HepG2 (cell line): ENCODE measurements at regions of chr18 and their contacts with region 1.

Region 1: DNA sequence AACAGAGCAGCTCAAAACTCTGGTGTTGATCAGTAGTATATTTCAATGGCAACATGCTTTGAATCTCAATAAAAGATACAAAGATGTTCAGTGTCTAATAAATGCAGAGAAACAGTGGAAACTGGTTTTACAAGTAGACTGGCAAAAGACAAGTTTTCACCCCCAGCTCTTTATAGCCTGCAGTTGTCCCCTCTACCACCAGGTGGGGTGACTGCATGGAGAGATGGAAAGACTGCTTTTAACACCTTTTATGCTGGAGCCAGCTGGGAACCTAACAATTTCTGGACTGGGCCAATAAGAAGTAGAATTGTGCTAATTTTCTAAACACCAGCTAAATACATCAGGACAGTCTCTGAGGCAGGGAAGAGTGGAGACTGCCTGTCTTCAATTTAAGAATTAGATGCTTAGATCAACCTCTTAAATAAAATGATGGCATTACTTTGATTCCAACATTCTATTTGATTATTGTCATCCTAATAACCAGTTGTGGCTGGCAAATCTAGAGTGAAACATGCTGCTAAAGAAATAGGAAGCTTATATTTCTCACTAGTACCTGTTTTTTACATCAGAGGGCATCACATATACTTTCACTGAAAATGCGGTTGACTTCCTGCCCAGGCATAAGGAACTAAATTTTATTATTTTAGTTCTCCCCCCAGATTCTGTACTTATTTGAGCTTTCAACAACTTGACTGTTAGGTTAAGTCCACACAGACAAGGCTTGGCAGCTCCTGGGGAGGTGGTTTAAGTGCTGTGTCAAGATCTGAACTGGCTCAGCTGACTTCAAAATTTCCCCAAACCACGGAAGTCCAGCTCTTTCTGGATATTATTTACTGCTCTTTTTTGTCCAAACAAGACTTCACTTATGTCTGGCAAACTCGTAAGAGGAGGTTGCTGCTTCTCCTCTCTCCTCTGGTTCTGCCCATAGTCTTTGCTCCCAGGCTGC is 140.5 kb downstream of the TPGS2 start:
- DNase-seq: peak; percentile 52
- ATAC-seq: peak; percentile 74; the same call in 2 of the 3 replicates
- H3K4me3 ChIP-seq: no peak overlapping the region
- H3K27ac ChIP-seq: no peak overlapping the region
- H3K4me1 ChIP-seq: no peaks in the 10 kb centered on the region
- H3K27me3 ChIP-seq: peaks cover 0 to 7% of the 10 kb centered on the region in 2 experiments; a peak in 2 of 5 replicates
- CTCF ChIP-seq: peak; percentile 78
- EP300 ChIP-seq: no peak
- POLR2A ChIP-seq: no peak
- RAD21 ChIP-seq: peak; percentile 51

Region 2: DNA sequence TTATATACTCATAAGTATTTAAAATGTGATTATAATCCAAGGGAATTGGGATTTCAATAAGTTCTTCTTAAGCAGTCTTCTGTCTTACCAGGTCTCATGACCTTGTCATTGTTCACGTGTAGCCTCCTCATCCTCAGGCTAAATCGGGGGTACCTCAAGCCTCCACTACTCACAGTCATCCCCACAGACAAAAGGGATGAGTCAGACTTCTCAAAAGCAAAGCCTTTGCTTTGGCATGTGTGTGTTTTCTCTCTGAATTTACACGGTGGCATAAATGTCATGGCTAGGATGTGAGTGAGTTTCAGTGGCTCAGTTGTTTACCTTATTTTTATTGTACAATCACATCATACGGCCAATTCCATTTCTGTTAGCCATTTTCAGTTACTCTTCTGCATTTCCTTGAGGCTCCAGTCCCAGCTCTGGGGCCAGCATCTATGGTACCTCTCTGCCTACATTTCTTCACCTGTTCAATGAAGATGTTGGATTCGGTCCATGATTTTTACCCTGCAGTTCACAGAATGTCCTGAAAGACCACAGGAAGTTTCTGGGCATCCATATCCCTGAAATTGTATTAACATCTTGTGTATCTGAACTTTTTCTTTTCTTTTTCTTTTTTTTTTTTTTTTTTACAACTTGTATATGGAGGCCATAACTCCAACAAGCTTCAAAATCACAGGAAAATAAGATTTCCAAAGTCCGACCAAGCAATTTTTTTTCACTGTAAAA is 195.5 kb before region 1 on chr18:
- CTCF ChIA-PET with region 1: no interaction called
- POLR2A ChIA-PET with region 1: no interaction called
- in situ Hi-C with region 1: no loop called
- intact Hi-C with region 1: no loop called
- DNase-seq: no peak
- ATAC-seq: no peak
- H3K4me3 ChIP-seq: no peak overlapping the region
- H3K27ac ChIP-seq: no peak overlapping the region
- H3K4me1 ChIP-seq: peaks cover 11% of the 10 kb centered on the region
- H3K27me3 ChIP-seq: peaks cover 0 to 3% of the 10 kb centered on the region in 2 experiments; a peak in 1 of 5 replicates
- CTCF ChIP-seq: no peak
- EP300 ChIP-seq: no peak
- POLR2A ChIP-seq: no peak
- RAD21 ChIP-seq: no peak

Region 3: GRCh38 chr18:36702401-36703013 is 14.2 kb after region 1 on chr18:
- CTCF ChIA-PET with region 1: no interaction called
- POLR2A ChIA-PET with region 1: no interaction called
- in situ Hi-C with region 1: no loop called
- intact Hi-C with region 1: no loop called
- DNase-seq: no peak
- ATAC-seq: no peak
- H3K4me3 ChIP-seq: no peak overlapping the region
- H3K27ac ChIP-seq: no peak overlapping the region
- H3K4me1 ChIP-seq: no peaks in the 10 kb centered on the region
- H3K27me3 ChIP-seq: peaks cover 3 to 57% of the 10 kb centered on the region in 2 experiments; a peak in 3 of 5 replicates
- CTCF ChIP-seq: no peak
- EP300 ChIP-seq: no peak
- POLR2A ChIP-seq: no peak
- RAD21 ChIP-seq: no peak

Region 4: GRCh38 chr18:36757081-36757480 is 68.8 kb after region 1 on chr18:
- CTCF ChIA-PET with region 1: interaction called, 35 read pairs
- POLR2A ChIA-PET with region 1: interaction called, 3 read pairs
- in situ Hi-C with region 1: loop called (anchors 5 kb)
- intact Hi-C with region 1: loop called (anchors 1 kb)
- DNase-seq: peak; percentile 48
- ATAC-seq: peak; percentile 71
- H3K4me3 ChIP-seq: no peak overlapping the region
- H3K27ac ChIP-seq: no peak overlapping the region
- H3K4me1 ChIP-seq: 0 out of 2 replicates have a peak, but pooled peaks cover 6% of the 10 kb centered on the region
- H3K27me3 ChIP-seq: no peaks in the 10 kb centered on the region
- CTCF ChIP-seq: peak; percentile 72
- EP300 ChIP-seq: no peak
- POLR2A ChIP-seq: no peak
- RAD21 ChIP-seq: peak; percentile 32; the same call in 1 of the 2 replicates

Region 5: DNA sequence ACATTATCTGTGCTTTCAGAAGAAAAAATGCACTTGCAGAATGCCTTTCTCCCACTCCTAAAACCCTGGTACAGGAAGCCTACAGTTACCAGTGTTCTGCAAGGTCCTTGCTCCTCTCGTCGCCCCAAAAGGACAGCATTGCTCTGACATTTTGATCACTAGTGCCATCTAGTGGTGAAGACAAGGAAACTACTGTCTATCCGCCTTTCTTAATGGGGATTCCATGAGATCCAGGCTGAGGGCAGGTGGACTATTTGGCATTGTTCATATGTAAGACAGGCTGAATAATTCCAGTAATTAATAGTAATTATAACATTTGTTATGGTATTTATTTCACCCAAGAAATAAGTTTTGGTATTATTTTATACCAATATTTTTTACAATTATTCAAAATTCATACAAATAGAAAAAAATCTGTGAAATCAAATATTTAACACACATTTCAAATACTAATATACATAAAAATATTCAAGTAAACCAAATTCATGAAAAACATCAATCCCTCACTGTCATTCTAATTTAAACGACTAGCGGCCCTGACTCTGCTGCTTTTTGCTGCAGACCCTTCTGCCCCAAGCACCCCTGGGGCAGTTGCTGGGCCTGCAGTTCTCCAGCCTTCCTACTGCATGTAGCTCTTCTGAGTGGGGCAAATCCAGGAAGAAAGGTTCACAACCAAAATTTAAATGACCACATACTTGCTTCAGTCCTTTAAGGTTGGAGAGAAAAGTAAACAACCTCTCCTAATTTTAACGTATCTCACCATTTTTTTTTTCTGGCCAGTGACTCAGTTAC is 121.5 kb after region 1 on chr18:
- CTCF ChIA-PET with region 1: interaction called, 5 read pairs
- POLR2A ChIA-PET with region 1: no interaction called
- in situ Hi-C with region 1: no loop called
- intact Hi-C with region 1: loop called (anchors 5 kb)
- DNase-seq: peak; percentile 56
- ATAC-seq: peak; percentile 94
- H3K4me3 ChIP-seq: no peak overlapping the region
- H3K27ac ChIP-seq: no peak overlapping the region
- H3K4me1 ChIP-seq: no peaks in the 10 kb centered on the region
- H3K27me3 ChIP-seq: no peaks in the 10 kb centered on the region
- CTCF ChIP-seq: peak; percentile 86
- EP300 ChIP-seq: no peak
- POLR2A ChIP-seq: no peak
- RAD21 ChIP-seq: no peak

Region 6: GRCh38 chr18:36828630-36829361 is 140.5 kb after region 1 on chr18 and contains the starts of genes KIAA1328 and TPGS2:
- CTCF ChIA-PET with region 1: no interaction called
- POLR2A ChIA-PET with region 1: no interaction called
- in situ Hi-C with region 1: no loop called
- intact Hi-C with region 1: no loop called
- DNase-seq: peak; percentile 75
- ATAC-seq: peak; percentile 93
- H3K4me3 ChIP-seq: peak within 1 kb of the TSS; percentile 94 to 99 (median 94)
- H3K27ac ChIP-seq: peak within 1 kb of the TSS; percentile 73
- H3K4me1 ChIP-seq: peaks cover 40% of the 10 kb centered on the region
- H3K27me3 ChIP-seq: no peaks in the 10 kb centered on the region; a peak in 1 of 5 replicates
- CTCF ChIP-seq: peak; percentile 85
- EP300 ChIP-seq: no peak
- POLR2A ChIP-seq: peak in 1 of 2 experiments; percentile 67
- RAD21 ChIP-seq: peak; percentile 7; the same call in 1 of the 2 replicates
- total RNA-seq, gene KIAA1328: 5.2 and 6.0 TPM in 2 replicates
- total RNA-seq, gene TPGS2: 72.1 and 73.3 TPM in 2 replicates

Region 7: GRCh38 chr18:36899289-36899688 is 211.0 kb after region 1 on chr18:
- CTCF ChIA-PET with region 1: no interaction called
- POLR2A ChIA-PET with region 1: no interaction called
- in situ Hi-C with region 1: no loop called
- intact Hi-C with region 1: loop called (anchors 10 kb)
- DNase-seq: peak; percentile 31
- ATAC-seq: no peak
- H3K4me3 ChIP-seq: no peak overlapping the region
- H3K27ac ChIP-seq: no peak overlapping the region
- H3K4me1 ChIP-seq: no peaks in the 10 kb centered on the region
- H3K27me3 ChIP-seq: no peaks in the 10 kb centered on the region
- CTCF ChIP-seq: peak; percentile 40; the same call in 1 of the 2 replicates
- EP300 ChIP-seq: no peak
- POLR2A ChIP-seq: no peak
- RAD21 ChIP-seq: no peak